SK-N-SH (cell line): ENCODE measurements at regions of chr12 and their contacts with region 1.

Region 1: DNA sequence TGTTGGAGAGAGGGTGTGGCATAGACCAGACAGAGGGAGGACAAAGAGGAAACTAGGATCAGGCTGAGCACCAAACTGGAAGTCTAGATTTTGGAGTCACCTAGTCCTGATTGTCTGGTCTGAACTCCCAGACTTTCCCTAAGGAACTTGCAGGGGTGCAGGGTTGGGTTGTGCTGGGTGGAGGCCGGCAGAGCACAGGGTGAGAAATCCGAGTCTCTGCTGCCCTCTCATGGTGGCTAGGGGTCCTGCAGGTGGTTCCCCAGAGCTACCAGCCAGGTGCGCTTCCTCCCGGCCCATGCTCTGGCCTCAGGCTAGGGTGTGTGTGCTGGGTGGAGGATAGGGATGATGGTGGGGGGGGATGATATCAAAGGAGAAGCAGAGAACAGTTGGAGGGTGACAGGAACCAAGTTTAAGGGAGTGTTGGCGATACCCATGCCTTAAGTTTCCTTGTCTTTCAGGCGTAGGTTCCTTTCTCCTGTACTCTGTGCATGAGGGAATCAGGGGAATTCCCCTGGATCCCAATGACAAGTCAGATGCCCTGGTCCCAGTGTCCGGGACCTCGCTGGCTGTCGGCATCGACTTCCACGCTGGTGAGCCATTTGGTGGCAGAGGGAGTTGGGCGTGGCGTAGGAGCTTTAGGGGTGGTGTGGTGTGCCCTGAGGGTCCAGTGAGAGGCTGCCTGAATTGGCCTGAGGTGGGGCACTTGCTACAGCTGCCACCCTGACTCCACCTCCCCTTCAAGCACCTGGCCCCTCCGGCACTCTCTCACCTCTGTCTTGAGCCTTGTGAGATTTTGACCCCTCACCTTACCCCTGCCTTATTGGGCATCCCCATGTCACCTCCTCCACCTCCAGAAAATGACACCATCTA is 33.4 kb upstream of the NXPH4 start:
- DNase-seq: peak; percentile 96
- H3K4me3 ChIP-seq: no peak overlapping the region
- H3K27ac ChIP-seq: no peak overlapping the region
- H3K4me1 ChIP-seq: no peaks in the 10 kb centered on the region
- H3K27me3 ChIP-seq: no peaks in the 10 kb centered on the region
- CTCF ChIP-seq: peak; percentile 87
- EP300 ChIP-seq: no peak
- RAD21 ChIP-seq: peak; percentile 90

Region 2: DNA sequence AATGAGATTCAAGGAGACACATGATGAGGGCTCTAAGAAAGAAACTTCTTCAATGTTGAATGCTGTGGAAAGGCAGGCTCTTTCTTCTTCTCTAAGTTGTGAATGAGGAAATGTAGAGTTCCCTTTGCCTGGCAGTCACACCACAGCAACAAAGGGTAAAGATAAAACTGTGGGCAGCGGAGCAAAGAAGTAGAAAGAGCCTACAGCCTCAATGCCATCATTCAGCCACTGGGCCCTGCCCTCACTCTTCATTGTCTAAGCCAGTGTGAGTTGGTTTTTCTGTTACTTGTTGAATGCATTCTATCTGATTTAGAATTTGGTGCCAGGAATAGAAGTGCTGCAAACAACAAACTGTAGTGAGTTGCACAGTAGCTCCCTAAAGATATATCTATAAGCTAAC is 261.1 kb before region 1 on chr12:
- CTCF ChIA-PET with region 1: no interaction called
- POLR2A ChIA-PET with region 1: no interaction called
- DNase-seq: no peak
- H3K4me3 ChIP-seq: no peak overlapping the region
- H3K27ac ChIP-seq: no peak overlapping the region
- H3K4me1 ChIP-seq: no peaks in the 10 kb centered on the region
- H3K27me3 ChIP-seq: no peaks in the 10 kb centered on the region; the same call in 1 of the 2 replicates
- CTCF ChIP-seq: no peak
- EP300 ChIP-seq: no peak
- RAD21 ChIP-seq: no peak

Region 3: GRCh38 chr12:57195611-57196371 is 12.6 kb after region 1 on chr12:
- CTCF ChIA-PET with region 1: interaction called, 12 read pairs
- POLR2A ChIA-PET with region 1: interaction called, 3 read pairs
- DNase-seq: no peak
- H3K4me3 ChIP-seq: no peak overlapping the region
- H3K27ac ChIP-seq: no peak overlapping the region
- H3K4me1 ChIP-seq: no peaks in the 10 kb centered on the region
- H3K27me3 ChIP-seq: no peaks in the 10 kb centered on the region
- CTCF ChIP-seq: no peak
- EP300 ChIP-seq: no peak
- RAD21 ChIP-seq: no peak

Region 4: GRCh38 chr12:57272337-57273151 is 89.4 kb after region 1 on chr12:
- CTCF ChIA-PET with region 1: no interaction called
- POLR2A ChIA-PET with region 1: no interaction called
- DNase-seq: peak; percentile 49
- H3K4me3 ChIP-seq: no peak overlapping the region
- H3K27ac ChIP-seq: peak overlapping the region; percentile 30 to 64; a peak in 2 of 4 replicates
- H3K4me1 ChIP-seq: peaks cover 7 to 12% of the 10 kb centered on the region in 2 experiments; a peak in 2 of 4 replicates
- H3K27me3 ChIP-seq: no peaks in the 10 kb centered on the region
- CTCF ChIP-seq: no peak
- EP300 ChIP-seq: no peak
- RAD21 ChIP-seq: no peak